Astrocyte of the cerebellum (primary cell): ENCODE measurements at regions of chr5 and their contacts with region 1.

Region 1: GRCh38 chr5:67268231-67269021 is 71.8 kb upstream of the CD180 start:
- DNase-seq: peak; percentile 98
- H3K4me3 ChIP-seq: no peak overlapping the region
- CTCF ChIP-seq: no peak

Region 2: DNA sequence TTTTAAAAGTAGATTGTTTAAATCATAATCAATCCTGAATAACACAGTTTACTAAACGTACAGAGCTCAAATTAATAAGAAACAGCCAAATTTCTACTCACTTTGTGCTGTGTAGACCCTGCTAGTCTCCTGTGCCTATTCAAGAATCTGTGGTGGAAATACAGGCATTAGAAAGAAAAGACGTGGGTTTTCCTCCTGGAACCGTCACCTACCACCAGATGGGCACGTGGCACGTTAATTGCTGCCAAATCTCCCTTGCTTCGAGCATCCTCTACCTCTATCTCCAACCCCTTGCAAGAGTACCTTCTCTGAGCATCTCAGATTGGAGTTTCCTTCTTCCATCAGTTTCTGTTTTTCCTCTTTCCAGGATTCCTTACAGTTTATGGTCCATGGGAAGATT is 34.7 kb before region 1 on chr5:
- in situ Hi-C with region 1: no loop called
- DNase-seq: no peak
- H3K4me3 ChIP-seq: no peak overlapping the region
- CTCF ChIP-seq: no peak

Region 3: GRCh38 chr5:67301285-67301903 is 33.0 kb after region 1 on chr5:
- in situ Hi-C with region 1: no loop called
- DNase-seq: peak; percentile 57
- H3K4me3 ChIP-seq: no peak overlapping the region
- CTCF ChIP-seq: no peak

Region 4: DNA sequence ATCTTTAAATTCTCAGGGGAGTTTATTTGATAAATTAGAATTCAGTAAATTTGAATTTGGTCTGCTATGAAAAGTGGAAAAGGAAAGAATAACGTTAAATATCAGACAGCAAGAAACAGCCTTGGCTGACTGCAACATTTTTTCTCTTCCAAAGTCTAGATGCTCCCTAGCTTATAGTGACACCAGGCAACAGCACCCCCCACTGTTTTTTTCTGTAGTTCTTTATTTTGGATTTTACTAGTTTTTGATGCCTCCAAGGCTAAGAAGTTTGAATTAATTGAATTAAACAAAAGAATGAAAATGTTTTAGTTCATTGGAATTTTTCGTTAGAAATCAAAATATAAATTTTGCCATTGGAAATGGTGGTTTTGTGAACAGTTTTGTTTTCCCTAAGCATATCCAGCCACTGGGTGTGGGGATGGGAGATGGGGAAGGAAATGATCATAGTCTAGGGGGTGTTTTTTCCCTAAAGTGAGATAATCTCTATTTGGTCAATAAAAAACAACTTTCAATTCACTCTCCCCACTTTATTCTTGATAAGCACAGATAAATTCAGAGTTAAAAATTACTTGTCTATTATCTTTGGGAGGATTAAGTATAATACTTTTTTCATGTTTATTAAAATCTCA is 127.5 kb after region 1 on chr5:
- in situ Hi-C with region 1: loop called (anchors 10 kb)
- DNase-seq: no peak
- H3K4me3 ChIP-seq: no peak overlapping the region
- CTCF ChIP-seq: no peak

Region 5: GRCh38 chr5:67447732-67448131 is 179.3 kb after region 1 on chr5:
- in situ Hi-C with region 1: loop called (anchors 5 kb)
- DNase-seq: no peak
- H3K4me3 ChIP-seq: no peak overlapping the region
- CTCF ChIP-seq: no peak

Region 6: DNA sequence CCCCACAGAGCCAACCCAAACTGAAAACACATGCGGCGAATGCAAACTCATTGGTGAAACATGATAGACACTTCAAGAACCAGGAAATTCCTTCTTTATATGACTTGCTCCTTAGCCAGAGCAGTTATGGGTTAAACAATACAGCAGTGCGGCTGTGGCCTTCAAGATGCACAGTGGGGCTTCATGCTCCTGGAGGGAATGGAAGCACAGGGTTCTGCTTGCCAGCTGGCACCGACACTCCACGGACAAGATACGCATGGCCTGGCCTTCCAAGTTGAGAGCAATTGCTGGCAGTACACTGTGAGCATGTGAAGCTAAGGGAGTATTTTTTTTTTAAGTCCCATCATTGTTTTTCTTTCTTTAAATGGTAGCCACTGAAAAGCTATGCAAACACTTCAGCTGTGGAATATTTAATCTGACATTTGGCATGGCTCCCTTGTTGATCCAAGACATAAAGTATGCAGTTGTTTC is 379.8 kb after region 1 on chr5:
- in situ Hi-C with region 1: loop called (anchors 10 kb)
- DNase-seq: peak; percentile 99
- H3K4me3 ChIP-seq: no peak overlapping the region
- CTCF ChIP-seq: no peak